ENCODE measurements at regions of chr4 and their contacts with region 1.

Region 1: GRCh38 chr4:73127839-73128453 is 58.4 kb upstream of the COX18 start:
- DNase-seq: peak; percentile 28
- H3K4me3 ChIP-seq: no peak overlapping the region
- H3K27ac ChIP-seq: no peak overlapping the region
- H3K4me1 ChIP-seq: no peaks in the 10 kb centered on the region
- CTCF ChIP-seq: peak; percentile 50; the same call in 1 of the 2 replicates

Region 2: DNA sequence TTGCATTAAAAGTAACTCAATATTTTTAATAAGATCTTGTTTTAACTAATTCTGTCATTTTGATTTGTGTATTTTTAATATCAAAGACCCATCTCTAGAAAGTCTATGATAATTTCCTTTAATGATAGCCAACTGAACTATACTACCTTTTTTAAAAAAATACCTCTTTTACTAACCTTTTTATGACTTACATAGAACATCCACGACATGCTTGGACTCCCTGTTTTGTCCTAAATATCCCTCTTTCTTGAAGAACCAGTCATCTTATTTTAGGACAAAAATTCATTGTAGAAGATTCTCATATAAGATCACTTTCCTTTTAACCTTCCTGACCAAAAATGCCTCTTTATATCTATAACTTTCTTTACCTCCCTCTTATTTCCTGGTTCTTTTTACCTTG is 1267.3 kb before region 1 on chr4:
- CTCF ChIA-PET with region 1: no interaction called
- POLR2A ChIA-PET with region 1: no interaction called
- intact Hi-C with region 1: no loop called
- DNase-seq: peak; percentile 39
- H3K4me3 ChIP-seq: no peak overlapping the region
- H3K27ac ChIP-seq: no peak overlapping the region
- H3K4me1 ChIP-seq: no peaks in the 10 kb centered on the region
- CTCF ChIP-seq: no peak

Region 3: GRCh38 chr4:73019462-73020047 is 108.4 kb before region 1 on chr4:
- CTCF ChIA-PET with region 1: no interaction called
- POLR2A ChIA-PET with region 1: no interaction called
- intact Hi-C with region 1: no loop called
- DNase-seq: peak; percentile 61
- H3K4me3 ChIP-seq: no peak overlapping the region
- H3K27ac ChIP-seq: no peak overlapping the region
- H3K4me1 ChIP-seq: no peaks in the 10 kb centered on the region
- CTCF ChIP-seq: peak; percentile 91

Region 4: DNA sequence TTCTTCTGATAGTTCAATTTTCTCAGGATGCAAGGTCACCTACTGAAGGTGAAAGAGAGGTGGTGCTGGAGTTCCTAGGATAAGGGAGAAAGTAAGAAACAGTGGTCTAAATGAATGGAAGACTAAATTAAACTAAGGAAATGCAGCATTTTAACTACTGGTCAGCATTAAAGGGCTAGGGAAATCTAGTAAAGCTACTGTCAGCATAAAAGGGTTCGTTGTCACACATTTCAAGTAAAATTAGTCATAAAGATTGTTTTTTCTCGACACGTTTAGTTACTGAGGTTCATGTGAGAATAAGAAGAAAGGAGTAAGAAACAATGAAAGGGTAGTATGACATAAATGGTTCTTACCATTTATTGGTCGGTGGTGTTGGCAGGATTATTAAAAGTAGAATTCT is 18.5 kb before region 1 on chr4:
- CTCF ChIA-PET with region 1: no interaction called
- POLR2A ChIA-PET with region 1: interaction called, 10 read pairs
- intact Hi-C with region 1: no loop called
- DNase-seq: no peak
- H3K4me3 ChIP-seq: no peak overlapping the region
- H3K27ac ChIP-seq: no peak overlapping the region
- H3K4me1 ChIP-seq: no peaks in the 10 kb centered on the region
- CTCF ChIP-seq: no peak

Region 5: GRCh38 chr4:73142995-73143547 is 15.1 kb after region 1 on chr4:
- CTCF ChIA-PET with region 1: interaction called, 3 read pairs
- POLR2A ChIA-PET with region 1: interaction called, 14 read pairs
- intact Hi-C with region 1: no loop called
- DNase-seq: no peak
- H3K4me3 ChIP-seq: no peak overlapping the region
- H3K27ac ChIP-seq: no peak overlapping the region
- H3K4me1 ChIP-seq: no peaks in the 10 kb centered on the region
- CTCF ChIP-seq: peak; percentile 76